Ovary (tissue), 10 donors: ENCODE measurements at regions of chr20 and their contacts with region 1.

Region 1: GRCh38 chr20:44388466-44389023 is 33.0 kb downstream of the HNF4A start:
- DNase-seq: peak; percentile 54 to 82 (median 69)
- H3K4me3 ChIP-seq: no peak overlapping the region
- H3K27ac ChIP-seq: no peak overlapping the region
- H3K4me1 ChIP-seq: peaks cover 13% of the 10 kb centered on the region
- H3K27me3 ChIP-seq: no peaks in the 10 kb centered on the region
- CTCF ChIP-seq: peak; percentile 45 to 75 (median 56)
- EP300 ChIP-seq: no peak
- POLR2A ChIP-seq: no peak

Region 2: GRCh38 chr20:44217342-44218092 is 171.0 kb before region 1 on chr20:
- intact Hi-C with region 1: loop called in 2 of 4 experiments (anchors 5 kb)
- DNase-seq: peak; percentile 49 to 63 (median 59)
- H3K4me3 ChIP-seq: no peak overlapping the region
- H3K27ac ChIP-seq: no peak overlapping the region
- H3K4me1 ChIP-seq: peaks cover 3% of the 10 kb centered on the region
- H3K27me3 ChIP-seq: no peaks in the 10 kb centered on the region
- CTCF ChIP-seq: peak; percentile 34 to 60 (median 43)
- EP300 ChIP-seq: no peak
- POLR2A ChIP-seq: no peak

Region 3: DNA sequence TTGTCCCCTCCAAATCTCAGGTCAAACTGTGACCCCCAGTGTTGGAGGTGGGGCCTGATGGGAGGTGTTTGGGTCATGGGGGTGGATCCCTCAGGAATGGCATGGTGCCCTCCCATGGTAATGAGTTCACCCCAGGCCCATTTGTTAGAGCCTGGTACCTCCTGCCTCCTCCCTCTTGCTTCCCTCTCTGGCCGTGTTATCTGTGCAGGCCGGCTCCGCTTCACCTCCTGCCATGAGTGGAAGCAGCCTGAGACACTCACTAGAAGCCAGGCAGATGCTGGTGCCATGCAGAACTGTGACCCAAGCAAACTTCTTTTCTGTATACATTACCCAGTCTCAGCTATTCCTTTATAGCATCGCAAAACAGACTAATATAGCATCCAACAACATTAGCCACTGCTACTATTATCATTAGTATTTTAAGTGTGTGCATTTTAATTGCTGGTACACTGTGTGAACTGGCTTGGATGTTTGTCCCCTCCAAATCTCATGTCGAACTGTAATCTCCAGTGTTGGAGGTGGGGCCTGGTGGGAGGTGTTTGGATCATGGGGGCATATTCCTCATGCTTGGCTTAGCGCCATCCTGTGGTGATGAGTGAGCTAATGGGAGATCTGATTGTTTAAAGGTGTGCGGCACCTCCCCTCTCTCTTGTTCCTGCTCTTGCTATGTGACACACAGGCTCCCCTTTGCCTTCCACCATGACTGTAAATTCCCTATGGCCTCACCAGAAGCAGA is 165.7 kb before region 1 on chr20:
- intact Hi-C with region 1: loop called in 2 of 4 experiments (anchors 5 kb)
- DNase-seq: no peak
- H3K4me3 ChIP-seq: no peak overlapping the region
- H3K27ac ChIP-seq: no peak overlapping the region
- H3K4me1 ChIP-seq: peaks cover 3% of the 10 kb centered on the region
- H3K27me3 ChIP-seq: no peaks in the 10 kb centered on the region
- CTCF ChIP-seq: no peak
- EP300 ChIP-seq: no peak
- POLR2A ChIP-seq: no peak

Region 4: DNA sequence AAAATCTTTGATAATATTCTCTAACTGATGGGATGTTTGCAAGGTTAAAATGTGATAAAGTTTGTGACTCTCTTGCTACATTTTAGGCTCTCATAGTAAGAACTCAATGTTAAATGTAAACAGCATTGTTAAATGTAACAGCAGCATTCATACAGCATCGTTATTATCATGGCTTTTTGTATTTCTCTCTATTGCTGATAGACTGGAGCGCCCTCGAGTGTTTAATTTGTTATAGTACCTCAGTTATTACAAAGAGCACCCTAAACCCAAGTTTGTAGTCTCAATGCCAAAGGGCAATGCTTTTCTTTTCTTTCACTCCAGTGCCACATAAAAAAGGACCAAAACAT is 72.2 kb after region 1 on chr20:
- intact Hi-C with region 1: loop called in 3 of 4 experiments (anchors 2 to 5 kb)
- DNase-seq: no peak
- H3K4me3 ChIP-seq: no peak overlapping the region
- H3K27ac ChIP-seq: no peak overlapping the region
- H3K4me1 ChIP-seq: no peaks in the 10 kb centered on the region
- H3K27me3 ChIP-seq: no peaks in the 10 kb centered on the region
- CTCF ChIP-seq: peak; percentile 51 to 71 (median 58)
- EP300 ChIP-seq: no peak
- POLR2A ChIP-seq: no peak